ENCODE measurements at regions of chr9 and their contacts with region 1.

Region 1: DNA sequence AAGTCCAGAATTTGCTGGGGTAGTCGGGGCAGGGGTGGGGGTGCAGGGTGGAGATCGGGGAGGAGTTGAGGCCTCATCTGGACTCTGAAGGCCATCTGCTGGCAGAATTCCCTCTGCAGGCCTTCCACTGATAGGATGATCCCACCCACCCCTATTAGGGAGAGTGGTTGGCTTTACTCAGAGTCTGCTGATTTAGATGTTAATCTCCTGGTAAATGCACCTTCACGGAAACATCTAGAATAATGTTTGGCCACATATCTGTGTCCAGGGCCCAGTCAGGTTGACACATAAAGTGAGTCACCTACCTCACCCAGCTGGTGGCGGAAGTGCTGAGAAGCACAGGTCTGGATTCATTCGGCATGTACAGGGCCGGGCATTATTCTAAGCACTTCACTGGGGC is 50.0 kb downstream of the DAPK1 start:
- DNase-seq: no peak
- CTCF ChIP-seq: no peak

Region 2: DNA sequence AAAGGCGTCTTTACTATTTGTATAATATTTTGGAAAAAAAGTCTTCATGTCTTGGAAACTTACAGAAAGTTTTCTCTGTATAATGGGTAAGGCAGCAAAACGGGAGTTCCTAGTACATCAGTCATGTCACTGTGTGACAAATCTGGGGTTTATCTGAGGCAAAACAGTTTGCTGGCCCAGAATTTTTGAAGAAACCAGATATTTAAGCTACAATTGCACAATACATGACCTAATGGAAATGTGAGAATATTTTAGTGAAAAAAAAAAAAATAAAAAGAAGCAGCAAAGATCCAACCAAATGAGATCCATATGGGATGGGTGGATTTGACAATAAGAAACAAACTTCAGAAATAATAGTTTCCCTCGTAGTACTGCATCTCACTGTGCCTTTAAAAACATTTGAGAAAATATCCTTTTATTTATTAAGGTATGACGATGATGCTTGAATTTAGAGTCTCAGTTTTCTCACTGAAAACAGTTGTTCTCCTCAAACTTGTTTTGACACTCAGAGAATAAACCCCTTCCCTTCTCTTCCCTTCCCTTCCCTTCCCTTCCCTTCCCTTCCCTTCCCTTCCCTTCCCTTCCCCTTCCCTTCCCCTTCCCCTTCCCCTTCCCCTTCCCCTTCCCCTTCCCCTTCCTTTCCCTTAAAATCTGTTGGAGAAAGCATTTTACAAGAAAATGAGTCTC is 1013.0 kb before region 1 on chr9:
- CTCF ChIA-PET with region 1: no interaction called
- POLR2A ChIA-PET with region 1: no interaction called
- DNase-seq: no peak
- CTCF ChIP-seq: no peak

Region 3: DNA sequence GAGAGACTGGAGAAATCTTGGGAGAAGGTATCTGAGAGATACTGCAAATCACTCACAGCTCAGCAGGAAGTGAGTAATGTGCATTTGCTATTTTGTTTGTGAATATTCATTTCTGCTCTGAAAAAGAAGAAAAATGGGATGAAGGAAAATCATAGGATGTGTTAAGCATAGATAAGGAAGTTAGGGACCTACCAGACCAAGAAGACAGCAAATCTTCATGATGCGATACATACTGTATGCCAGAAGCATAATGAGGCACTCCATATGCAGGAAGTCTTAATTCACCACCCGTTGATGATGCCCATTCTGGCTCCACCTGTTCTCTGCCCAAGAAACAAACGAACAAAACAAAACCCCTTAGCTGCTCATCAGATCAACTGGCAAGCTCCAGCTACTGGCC is 56.1 kb before region 1 on chr9:
- CTCF ChIA-PET with region 1: no interaction called
- POLR2A ChIA-PET with region 1: no interaction called
- DNase-seq: no peak
- CTCF ChIP-seq: no peak

Region 4: GRCh38 chr9:87535817-87536539 is 11.7 kb before region 1 on chr9:
- CTCF ChIA-PET with region 1: interaction called, 14 read pairs
- POLR2A ChIA-PET with region 1: interaction called, 4 read pairs
- DNase-seq: peak; percentile 56
- CTCF ChIP-seq: no peak

Region 5: DNA sequence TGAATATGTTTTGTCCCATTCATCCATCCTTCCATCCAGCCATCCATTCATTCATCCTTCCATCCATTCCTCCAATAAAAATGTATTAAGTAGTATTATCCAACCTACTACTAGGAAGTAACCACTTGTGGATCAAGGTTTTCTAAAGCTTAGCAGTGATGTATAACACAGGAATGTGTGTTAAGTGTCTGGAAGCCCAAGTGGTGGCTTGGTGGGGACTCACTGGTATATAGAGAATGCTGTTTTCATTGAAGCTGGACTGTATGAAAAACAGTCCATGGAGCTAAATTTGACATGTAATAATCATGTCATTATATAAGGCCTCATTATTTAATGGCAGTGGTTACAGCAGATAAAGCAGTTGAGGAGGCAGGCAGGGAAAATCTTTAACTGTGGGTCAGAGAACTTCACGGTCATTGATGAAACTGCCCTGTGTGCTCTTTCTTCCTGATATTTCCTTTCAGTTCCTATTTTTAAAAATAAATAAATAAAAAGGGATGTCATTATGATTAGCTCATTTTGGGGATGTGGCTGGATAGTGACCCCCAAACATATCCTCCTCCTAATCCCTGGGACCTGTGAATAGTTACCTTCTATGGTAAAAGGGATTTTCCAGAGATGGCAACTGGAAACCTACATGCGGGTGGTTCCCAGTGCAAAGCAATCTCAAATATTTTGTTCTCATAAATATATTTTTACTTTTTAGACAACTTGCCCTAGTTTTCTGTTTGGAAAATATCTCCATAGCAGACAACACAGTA is 32.3 kb after region 1 on chr9:
- CTCF ChIA-PET with region 1: no interaction called
- POLR2A ChIA-PET with region 1: no interaction called
- DNase-seq: no peak
- CTCF ChIP-seq: no peak